ENCODE measurements at regions of chr3 and their contacts with region 1.

Region 1: DNA sequence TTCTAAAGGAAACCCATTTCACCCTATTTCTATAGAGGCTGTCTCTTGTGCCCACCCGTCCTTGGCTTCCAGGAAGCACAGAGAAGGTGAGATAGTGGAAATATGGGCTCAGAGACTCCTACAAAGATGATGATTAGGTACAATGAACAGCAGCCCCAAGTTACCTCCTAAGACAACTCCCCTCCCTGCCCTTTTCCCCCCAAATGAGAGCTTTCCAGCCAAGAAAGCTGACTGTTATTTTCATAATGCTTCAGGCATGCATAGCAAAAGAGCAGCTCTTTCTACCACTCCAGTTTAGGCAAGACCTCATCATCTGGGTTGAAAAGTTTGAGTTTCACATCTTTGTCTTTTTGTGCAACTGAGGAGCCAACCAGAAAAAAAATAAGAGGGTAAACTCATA is 248.8 kb upstream of the ADAMTS9 start:
- DNase-seq: no peak
- ATAC-seq: peak; percentile 67
- H3K4me3 ChIP-seq: no peak overlapping the region
- H3K27ac ChIP-seq: peak overlapping the region in 1 of 2 donors; percentile 90
- H3K4me1 ChIP-seq: peaks cover 3 to 6% of the 10 kb centered on the region in 2 donors
- H3K27me3 ChIP-seq: no peaks in the 10 kb centered on the region

Region 2: GRCh38 chr3:64895991-64896895 is 40.3 kb before region 1 on chr3:
- intact Hi-C with region 1: loop called in 1 of 2 experiments (anchors 5 kb)
- DNase-seq: no peak
- ATAC-seq: no peak
- H3K4me3 ChIP-seq: no peak overlapping the region
- H3K27ac ChIP-seq: peak overlapping the region; percentile 68 to 82
- H3K4me1 ChIP-seq: peaks cover 8 to 14% of the 10 kb centered on the region in 2 donors
- H3K27me3 ChIP-seq: no peaks in the 10 kb centered on the region

Region 3: DNA sequence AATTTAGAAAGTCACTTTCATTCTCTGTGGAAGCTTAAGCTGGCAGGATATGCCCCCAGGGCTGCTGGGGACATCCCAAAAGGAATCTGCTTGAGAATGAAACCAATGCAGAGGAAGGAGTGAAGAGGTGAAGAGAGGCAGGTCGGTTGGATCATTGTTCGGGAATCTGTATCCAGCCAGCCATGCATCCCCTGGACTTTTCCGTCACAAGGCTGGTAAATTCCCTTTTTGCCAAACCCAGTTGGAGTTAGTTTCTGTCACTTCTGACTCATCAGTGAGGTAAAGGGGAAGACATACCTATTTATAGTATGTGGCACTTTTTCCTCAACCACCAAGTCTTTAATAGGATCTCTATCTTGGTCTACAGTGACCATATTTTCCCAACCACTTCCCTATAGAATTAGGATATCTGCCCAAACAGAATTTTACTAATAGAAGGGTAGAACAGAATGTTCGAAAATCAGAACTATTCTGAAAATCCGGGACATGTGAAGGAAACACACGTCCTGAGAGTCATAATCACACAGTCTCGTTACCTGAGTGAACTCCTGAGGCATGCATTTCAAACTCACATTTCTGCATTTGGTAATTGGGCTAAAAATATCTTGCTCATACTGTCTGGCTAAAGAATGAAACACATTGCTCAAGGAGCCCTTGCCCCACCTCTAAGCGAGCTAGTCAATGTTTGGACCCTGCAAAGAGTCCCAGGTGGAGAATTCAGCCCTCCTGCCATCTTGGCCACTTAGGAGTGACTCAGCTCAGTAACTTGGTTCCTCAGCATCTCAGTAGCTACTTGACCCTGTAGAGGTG is 40.9 kb after region 1 on chr3:
- intact Hi-C with region 1: no loop called
- DNase-seq: no peak
- ATAC-seq: no peak
- H3K4me3 ChIP-seq: no peak overlapping the region
- H3K27ac ChIP-seq: no peak overlapping the region
- H3K4me1 ChIP-seq: no peaks in the 10 kb centered on the region
- H3K27me3 ChIP-seq: no peaks in the 10 kb centered on the region

Measured in aorta (tissue), 5 donors.